Prostate gland (tissue), 2 donors: ENCODE measurements at regions of chr14 and their contacts with region 1.

Region 1: DNA sequence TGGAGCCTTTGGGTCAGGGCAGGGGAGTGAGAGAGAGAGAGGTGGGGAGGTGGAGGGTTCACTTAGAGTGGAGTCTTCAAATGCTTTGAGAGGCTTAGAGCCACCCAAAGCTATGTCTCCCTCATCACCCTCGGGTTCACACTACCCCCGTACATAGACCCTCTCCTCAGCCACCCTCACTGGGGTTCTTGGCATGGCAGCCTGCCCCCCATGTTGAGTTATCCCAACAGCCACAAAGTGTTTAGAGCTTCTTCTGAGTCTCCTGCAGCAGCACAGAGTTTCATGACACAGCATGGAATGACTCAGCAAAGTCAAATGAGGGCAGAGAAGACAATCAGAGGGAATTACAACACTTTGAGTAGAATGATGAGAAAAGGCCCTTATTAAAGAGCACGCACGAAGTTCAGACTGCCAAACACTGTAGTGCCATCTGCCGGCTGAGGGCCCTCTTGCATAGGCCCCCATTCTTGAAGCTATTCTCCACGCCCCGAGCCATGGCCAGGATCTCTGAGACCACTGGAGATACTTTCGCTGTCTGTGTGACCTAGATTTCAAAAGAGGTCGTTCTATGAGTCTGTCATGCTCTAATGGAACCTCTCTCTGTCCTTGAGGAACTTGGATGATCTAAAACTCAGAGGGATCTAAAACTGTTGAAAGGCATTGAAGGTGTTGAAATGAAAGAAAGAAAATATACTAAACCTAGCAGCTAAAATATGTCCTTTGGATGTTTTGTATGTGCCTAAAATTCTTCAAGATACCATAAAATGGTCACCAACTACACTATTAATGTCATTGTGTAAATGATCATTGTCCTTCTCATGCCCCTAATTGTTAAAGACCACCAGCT is 221.9 kb downstream of the PELI2 start:
- DNase-seq: peak; percentile 46
- H3K4me3 ChIP-seq: no peak overlapping the region
- H3K27ac ChIP-seq: no peak overlapping the region
- H3K4me1 ChIP-seq: no peaks in the 10 kb centered on the region
- H3K27me3 ChIP-seq: no peaks in the 10 kb centered on the region
- CTCF ChIP-seq: peak; percentile 47 to 80 (median 68)
- POLR2A ChIP-seq: no peak

Region 2: GRCh38 chr14:55707365-55707804 is 632.7 kb before region 1 on chr14:
- intact Hi-C with region 1: loop called (anchors 5 kb)
- DNase-seq: peak; percentile 51
- H3K4me3 ChIP-seq: no peak overlapping the region
- H3K27ac ChIP-seq: no peak overlapping the region
- H3K4me1 ChIP-seq: no peaks in the 10 kb centered on the region
- H3K27me3 ChIP-seq: no peaks in the 10 kb centered on the region
- CTCF ChIP-seq: peak in 3 of 4 experiments; percentile 47 to 83 (median 76)
- POLR2A ChIP-seq: no peak

Region 3: DNA sequence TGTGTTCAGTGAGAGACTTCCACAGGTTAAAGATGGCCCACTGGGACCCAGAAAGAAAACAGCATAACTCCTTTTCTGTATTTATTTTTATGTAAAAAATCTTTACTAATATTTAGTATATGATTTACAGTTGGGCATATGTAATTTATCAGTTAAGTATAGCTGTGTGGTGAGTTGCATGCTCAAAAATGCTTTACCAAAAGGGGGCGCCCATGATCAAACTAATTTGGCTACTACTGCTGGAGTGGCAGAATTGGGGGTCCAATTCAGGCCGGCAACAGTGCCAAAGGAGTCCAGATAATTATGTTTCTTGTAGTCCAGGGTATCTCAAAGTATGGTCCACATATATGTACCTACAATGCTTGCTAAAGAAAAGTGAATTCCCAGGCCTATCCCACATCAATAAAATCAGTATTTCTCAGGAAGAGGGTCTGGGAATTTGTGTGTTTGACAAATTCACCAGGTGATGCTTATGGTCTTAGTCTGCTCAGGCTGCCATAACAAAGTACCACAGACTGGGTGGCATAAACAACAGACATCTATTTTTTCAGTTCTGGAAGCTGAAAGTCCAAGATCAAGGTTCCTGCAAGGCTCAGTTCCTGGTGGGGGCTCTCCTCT is 608.1 kb before region 1 on chr14:
- intact Hi-C with region 1: loop called (anchors 5 kb)
- DNase-seq: no peak
- H3K4me3 ChIP-seq: no peak overlapping the region
- H3K27ac ChIP-seq: no peak overlapping the region
- H3K4me1 ChIP-seq: no peaks in the 10 kb centered on the region
- H3K27me3 ChIP-seq: no peaks in the 10 kb centered on the region
- CTCF ChIP-seq: peak in 3 of 4 experiments; percentile 41 to 51 (median 42)
- POLR2A ChIP-seq: no peak

Region 4: GRCh38 chr14:56117765-56118610 is 222.1 kb before region 1 on chr14 and contains the start of gene PELI2:
- intact Hi-C with region 1: loop called (anchors 5 kb)
- DNase-seq: peak; percentile 71
- H3K4me3 ChIP-seq: peak within 1 kb of the TSS; percentile 90 to 91
- H3K27ac ChIP-seq: peak within 1 kb of the TSS; percentile 90 to 94
- H3K4me1 ChIP-seq: no peaks in the 10 kb centered on the region
- H3K27me3 ChIP-seq: no peaks in the 10 kb centered on the region
- CTCF ChIP-seq: peak in 2 of 4 experiments; percentile 37 to 45
- POLR2A ChIP-seq: peak; percentile 76
- total RNA-seq, gene PELI2: 8.9 to 25.7 TPM

Region 5: DNA sequence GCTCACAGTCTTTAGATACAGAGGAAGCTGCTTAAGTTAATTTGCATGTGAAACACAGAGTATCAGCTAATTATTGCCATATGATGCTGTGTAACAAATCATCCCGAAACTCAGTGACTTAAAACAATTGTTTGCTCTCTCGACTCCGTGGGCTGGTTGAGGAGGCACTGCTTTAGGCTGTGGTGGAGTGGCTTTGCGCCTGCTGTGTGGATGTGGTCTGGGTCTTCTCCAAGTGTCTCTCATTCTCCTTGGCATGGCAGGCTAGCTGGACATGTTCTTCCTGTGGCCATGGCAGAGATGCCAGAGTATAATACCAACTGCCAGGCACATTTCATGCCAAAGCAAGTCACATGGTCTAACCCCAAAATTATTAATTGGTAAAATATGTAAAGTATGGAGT is 181.0 kb before region 1 on chr14:
- intact Hi-C with region 1: no loop called
- DNase-seq: no peak
- H3K4me3 ChIP-seq: no peak overlapping the region
- H3K27ac ChIP-seq: no peak overlapping the region
- H3K4me1 ChIP-seq: no peaks in the 10 kb centered on the region
- H3K27me3 ChIP-seq: no peaks in the 10 kb centered on the region
- CTCF ChIP-seq: no peak
- POLR2A ChIP-seq: no peak

Region 6: DNA sequence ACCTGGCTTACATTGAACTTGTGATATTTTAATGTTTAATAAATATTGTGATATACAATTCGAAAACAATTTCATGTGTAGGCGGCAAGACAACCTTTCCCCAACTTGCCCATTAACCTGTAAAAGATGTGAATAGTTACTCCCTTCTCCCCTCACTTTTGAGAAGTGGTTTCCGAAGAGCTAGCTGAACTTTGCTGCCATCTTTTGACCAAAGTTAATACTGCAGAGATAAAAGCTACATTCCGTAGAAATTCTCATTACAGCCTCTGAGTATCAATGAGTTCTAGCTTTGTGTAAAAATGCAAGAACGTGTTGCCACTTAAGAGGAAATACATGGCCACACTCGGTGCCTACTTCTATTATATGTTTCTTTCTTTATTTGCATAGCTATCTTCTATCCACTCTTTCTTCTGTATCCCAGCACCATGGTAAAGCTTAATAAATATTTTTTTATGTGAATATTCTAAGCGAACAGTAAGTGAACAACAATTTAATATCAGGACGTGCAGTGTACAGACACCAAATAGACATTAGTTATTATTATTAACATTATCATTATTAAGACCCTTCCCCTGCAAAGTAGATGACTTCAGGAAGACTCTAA is 134.4 kb after region 1 on chr14:
- intact Hi-C with region 1: loop called (anchors 10 kb)
- DNase-seq: no peak
- H3K4me3 ChIP-seq: no peak overlapping the region
- H3K27ac ChIP-seq: no peak overlapping the region
- H3K4me1 ChIP-seq: no peaks in the 10 kb centered on the region
- H3K27me3 ChIP-seq: no peaks in the 10 kb centered on the region
- CTCF ChIP-seq: peak in 3 of 4 experiments; percentile 49 to 75 (median 69)
- POLR2A ChIP-seq: no peak

Region 7: GRCh38 chr14:56491299-56492285 is 151.5 kb after region 1 on chr14:
- intact Hi-C with region 1: no loop called
- DNase-seq: peak; percentile 19
- H3K4me3 ChIP-seq: no peak overlapping the region
- H3K27ac ChIP-seq: no peak overlapping the region
- H3K4me1 ChIP-seq: no peaks in the 10 kb centered on the region
- H3K27me3 ChIP-seq: no peaks in the 10 kb centered on the region
- CTCF ChIP-seq: peak in 3 of 4 experiments; percentile 39 to 56 (median 51)
- POLR2A ChIP-seq: no peak